GM10248 (cell line): ENCODE measurements at regions of chr1 and their contacts with region 1.

Region 1: GRCh38 chr1:9494929-9495758 is 44.1 kb upstream of the SLC25A33 start:
- DNase-seq: peak; percentile 83
- CTCF ChIP-seq: peak; percentile 91

Region 2: DNA sequence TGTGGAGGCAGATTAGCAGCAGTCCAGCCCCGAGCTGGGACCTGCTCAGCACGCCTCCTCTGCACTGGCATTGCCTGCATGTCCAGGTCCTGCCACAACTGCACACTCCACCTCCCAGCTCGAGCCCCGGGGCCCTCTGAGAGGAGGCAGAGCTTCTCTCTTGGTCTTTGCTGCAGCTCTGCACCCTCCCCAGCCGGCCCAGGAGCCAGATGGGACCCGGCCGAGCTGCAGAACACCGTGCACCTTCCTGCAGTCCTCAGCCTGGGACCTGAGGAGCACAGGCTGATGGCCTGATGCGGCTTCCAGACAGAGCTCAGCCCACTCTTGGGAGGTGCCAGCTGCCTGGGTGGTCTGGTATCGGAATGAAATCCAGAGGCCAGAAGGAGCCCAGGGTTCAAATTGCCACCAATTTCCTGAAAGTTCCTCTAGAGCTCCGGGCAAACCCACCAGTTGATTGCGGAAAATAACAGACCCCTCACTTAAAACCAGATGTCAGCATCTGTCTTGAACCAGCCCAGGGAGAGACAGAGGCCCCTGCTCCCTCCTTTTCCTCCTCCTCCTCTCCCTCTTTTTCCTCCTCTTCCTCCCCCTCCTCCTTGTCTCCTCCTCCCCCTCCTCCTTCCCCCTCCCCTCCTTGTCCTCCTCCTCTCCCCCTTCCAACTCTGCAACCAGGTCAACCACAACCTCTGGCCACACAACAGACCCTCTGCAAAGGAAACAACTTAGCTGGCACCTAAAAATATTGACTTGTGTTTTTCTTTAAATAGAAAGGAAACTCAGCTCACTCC is 213.0 kb before region 1 on chr1:
- CTCF ChIA-PET with region 1: interaction called, 82 read pairs
- POLR2A ChIA-PET with region 1: interaction called, 5 read pairs
- DNase-seq: no peak
- CTCF ChIP-seq: no peak

Region 3: GRCh38 chr1:9455487-9456234 is 39.5 kb before region 1 on chr1:
- CTCF ChIA-PET with region 1: interaction called, 12 read pairs
- POLR2A ChIA-PET with region 1: no interaction called
- DNase-seq: peak; percentile 82
- CTCF ChIP-seq: peak; percentile 79

Region 4: GRCh38 chr1:9481048-9481447 is 14.1 kb before region 1 on chr1:
- CTCF ChIA-PET with region 1: interaction called, 18 read pairs
- POLR2A ChIA-PET with region 1: no interaction called
- DNase-seq: no peak
- CTCF ChIP-seq: no peak

Region 5: GRCh38 chr1:9573723-9574122 is 78.6 kb after region 1 on chr1:
- CTCF ChIA-PET with region 1: interaction called, 26 read pairs
- POLR2A ChIA-PET with region 1: no interaction called
- DNase-seq: peak; percentile 28
- CTCF ChIP-seq: no peak